GM10248 (cell line): ENCODE measurements at regions of chr5 and their contacts with region 1.

Region 1: DNA sequence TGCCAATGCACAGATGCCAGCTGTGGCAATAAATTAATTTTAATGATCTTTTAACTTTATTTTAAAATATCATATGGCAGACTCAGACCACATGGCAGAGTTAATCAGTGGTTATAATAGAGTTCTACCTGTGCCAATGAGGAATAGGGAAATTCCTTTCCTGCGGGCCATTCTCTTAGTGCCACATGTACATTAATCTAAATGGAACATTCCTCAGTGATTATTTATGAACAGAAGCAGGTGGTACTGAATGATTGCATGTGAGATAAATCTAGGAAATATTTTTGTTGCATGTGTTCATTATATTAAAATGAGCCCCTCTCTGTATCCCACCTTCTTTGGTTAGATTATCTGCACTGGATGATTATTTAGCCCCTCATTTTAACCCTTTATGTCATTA is 102.3 kb downstream of the CCDC192 start:
- DNase-seq: no peak
- CTCF ChIP-seq: no peak

Region 2: DNA sequence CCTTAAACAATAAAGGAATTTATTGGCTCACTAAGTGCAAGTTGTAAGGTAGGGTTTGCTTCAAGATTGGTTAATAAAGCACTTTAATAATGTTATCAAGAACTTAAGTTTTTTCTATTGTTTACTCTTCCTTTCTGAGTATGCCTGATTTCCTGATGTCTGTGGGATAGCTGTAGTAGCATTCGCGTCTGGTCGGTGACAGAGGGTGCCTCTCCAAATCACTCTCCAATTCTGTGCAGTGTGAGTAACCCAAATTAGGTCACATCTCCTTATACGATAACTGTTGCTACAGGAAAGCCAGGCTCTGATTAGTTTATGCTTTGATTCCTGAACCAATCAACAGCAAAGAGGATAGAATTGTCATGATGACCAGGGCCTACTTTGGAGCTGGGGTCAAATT is 11.6 kb before region 1 on chr5:
- CTCF ChIA-PET with region 1: interaction called, 11 read pairs
- POLR2A ChIA-PET with region 1: no interaction called
- DNase-seq: no peak
- CTCF ChIP-seq: no peak